ENCODE measurements at regions of chr20 and their contacts with region 1.

Region 1: GRCh38 chr20:49024220-49024619 is 21.9 kb upstream of the CSE1L start:
- DNase-seq: no peak
- H3K4me3 ChIP-seq: no peak overlapping the region
- H3K27ac ChIP-seq: no peak overlapping the region
- H3K4me1 ChIP-seq: no peaks in the 10 kb centered on the region
- CTCF ChIP-seq: no peak

Region 2: GRCh38 chr20:47088335-47088734 is 1935.9 kb before region 1 on chr20:
- CTCF ChIA-PET with region 1: no interaction called
- POLR2A ChIA-PET with region 1: interaction called, 10 read pairs
- intact Hi-C with region 1: no loop called
- DNase-seq: no peak
- H3K4me3 ChIP-seq: no peak overlapping the region
- H3K27ac ChIP-seq: no peak overlapping the region
- H3K4me1 ChIP-seq: no peaks in the 10 kb centered on the region
- CTCF ChIP-seq: no peak

Region 3: DNA sequence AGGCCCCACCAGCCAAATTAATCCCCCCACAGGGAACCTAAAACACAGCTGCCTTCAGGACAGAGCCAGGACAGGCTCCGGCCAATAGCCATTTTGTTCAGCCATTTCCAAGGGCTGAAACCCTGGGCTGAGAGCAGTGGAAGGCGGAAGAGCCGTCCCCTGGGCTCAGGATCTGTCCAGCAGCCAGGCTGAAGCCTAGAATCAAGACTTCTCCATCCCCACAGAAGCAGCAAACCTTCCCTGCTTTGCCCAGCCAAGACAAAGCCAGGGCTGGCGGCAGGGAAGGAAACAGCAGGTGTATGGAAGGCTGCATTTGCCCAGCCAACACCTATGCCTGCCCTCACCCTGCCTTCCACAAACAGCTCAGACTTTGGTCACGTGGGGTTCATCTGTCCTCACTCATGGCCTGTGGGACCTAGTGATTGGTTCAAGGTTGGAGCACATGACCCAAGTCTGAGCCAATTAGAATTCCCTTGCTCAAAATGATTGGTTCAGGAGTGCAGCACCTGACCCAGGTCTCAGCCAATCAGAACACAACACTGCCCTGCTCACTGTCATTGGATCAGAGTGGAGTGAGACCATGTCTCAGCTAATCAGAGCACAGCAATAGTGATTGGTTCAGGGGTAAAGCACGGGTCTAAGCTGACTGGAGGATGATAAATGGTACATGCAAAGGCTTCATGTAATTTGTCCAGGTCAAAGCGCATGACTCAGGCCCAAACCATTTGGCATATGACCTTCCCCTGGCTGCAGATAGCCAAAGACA is 298.8 kb before region 1 on chr20:
- CTCF ChIA-PET with region 1: no interaction called
- POLR2A ChIA-PET with region 1: no interaction called
- intact Hi-C with region 1: no loop called
- DNase-seq: no peak
- H3K4me3 ChIP-seq: no peak overlapping the region
- H3K27ac ChIP-seq: no peak overlapping the region
- H3K4me1 ChIP-seq: peaks cover 30% of the 10 kb centered on the region
- CTCF ChIP-seq: no peak

Region 4: DNA sequence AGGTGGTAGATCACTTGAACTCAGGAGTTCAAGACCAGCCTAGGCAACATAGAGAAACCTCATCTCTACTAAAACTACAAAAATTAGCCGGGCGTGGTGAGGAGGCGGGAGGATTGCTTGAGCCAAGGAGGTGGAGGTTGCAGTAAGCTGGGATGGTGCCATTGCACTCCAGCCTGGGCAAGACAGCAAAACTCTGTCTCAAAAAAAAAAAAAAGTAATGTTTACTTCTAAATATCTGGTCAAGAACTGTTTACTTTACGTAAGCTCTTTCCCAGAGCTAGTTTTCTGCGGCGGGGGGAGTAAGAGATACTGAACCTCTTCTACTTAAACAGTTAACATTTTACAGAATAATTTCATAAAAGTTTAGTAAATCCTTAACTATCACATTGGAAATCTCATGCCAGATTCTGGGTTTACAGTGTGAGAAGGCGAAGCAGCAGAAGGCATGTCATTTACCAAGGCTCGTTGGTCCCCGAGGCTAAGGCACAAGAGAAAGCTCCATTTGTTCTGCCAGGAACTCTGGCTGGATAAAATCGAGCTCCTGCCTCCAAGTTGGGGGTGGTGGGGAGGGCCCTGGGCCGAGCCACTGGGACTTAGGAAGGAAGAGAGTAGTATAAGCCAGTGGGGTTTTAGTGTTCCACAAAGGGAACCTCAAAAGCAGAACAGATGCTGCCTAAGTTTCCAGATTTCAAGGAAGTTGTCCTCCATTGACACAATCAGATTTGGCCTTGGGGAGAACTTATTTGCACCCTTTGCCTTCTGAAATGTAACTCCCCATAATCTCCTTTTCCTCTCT is 61.0 kb before region 1 on chr20:
- CTCF ChIA-PET with region 1: no interaction called
- POLR2A ChIA-PET with region 1: no interaction called
- intact Hi-C with region 1: no loop called
- DNase-seq: no peak
- H3K4me3 ChIP-seq: no peak overlapping the region
- H3K27ac ChIP-seq: no peak overlapping the region
- H3K4me1 ChIP-seq: no peaks in the 10 kb centered on the region
- CTCF ChIP-seq: no peak

Region 5: GRCh38 chr20:49078296-49078695 is 54.1 kb after region 1 on chr20:
- CTCF ChIA-PET with region 1: no interaction called
- POLR2A ChIA-PET with region 1: interaction called, 3 read pairs
- intact Hi-C with region 1: loop called (anchors 5 kb)
- DNase-seq: no peak
- H3K4me3 ChIP-seq: no peak overlapping the region
- H3K27ac ChIP-seq: no peak overlapping the region
- H3K4me1 ChIP-seq: no peaks in the 10 kb centered on the region
- CTCF ChIP-seq: no peak

Measured in OCI-LY7 (cell line).